GM13977 (cell line): ENCODE measurements at regions of chr6 and their contacts with region 1.

Region 1: GRCh38 chr6:75526502-75527127 is 33.0 kb upstream of the FILIP1 start:
- DNase-seq: peak; percentile 27
- CTCF ChIP-seq: peak; percentile 68

Region 2: DNA sequence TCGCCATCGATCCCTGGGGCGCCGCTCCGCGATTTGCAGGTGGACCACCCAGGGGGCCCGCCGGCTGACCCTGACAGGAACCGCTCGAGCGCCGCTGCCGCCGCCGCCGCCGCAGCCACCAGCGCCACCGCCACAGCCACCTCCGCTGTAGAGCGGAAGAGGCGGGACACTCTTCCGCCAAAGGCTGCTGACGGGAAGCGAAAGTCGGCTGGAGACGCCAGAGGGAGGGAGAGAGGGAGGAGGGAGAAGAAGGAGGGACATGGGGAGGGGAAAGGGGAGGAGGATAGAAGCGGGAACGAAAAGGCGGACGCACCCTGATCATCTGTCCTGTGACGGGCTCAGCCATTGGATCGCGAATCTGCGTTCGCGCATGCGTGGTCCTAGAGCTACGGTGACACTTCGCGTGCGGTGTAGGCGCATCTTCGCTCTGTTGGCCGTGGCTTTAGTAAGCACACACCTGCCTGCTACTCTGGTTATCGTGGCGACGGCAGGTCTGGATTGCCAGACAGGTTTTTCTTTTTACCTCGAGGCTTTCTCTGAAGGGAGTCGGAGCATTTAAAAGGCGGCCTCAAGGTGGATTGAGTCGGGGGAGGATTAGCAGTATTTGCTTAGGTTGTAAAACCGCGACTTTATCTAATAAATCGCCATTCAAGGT is 241.9 kb before region 1 on chr6 and contains the start of gene TMEM30A:
- in situ Hi-C with region 1: loop called (anchors 25 kb)
- DNase-seq: peak; percentile 95
- CTCF ChIP-seq: no peak

Region 3: GRCh38 chr6:75334266-75335040 is 192.2 kb before region 1 on chr6:
- in situ Hi-C with region 1: no loop called
- DNase-seq: no peak
- CTCF ChIP-seq: no peak